ENCODE measurements at regions of chr21 and their contacts with region 1.

Region 1: GRCh38 chr21:45820171-45821091 is 161.1 kb upstream of the COL6A1 start:
- DNase-seq: peak; percentile 59 to 81 (median 76)
- ATAC-seq: peak; percentile 80
- H3K4me3 ChIP-seq: no peak overlapping the region
- H3K4me3 Mint-ChIP-seq: peak overlapping the region in 1 of 10 donors; percentile 1
- H3K27ac ChIP-seq: no peak overlapping the region
- H3K27ac Mint-ChIP-seq: peak overlapping the region in 7 of 9 donors; percentile 26 to 89 (median 58)
- H3K4me1 ChIP-seq: peaks cover 0 to 9% of the 10 kb centered on the region in 2 donors
- H3K4me1 Mint-ChIP-seq: peaks cover 0 to 36% (median 17%) of the 10 kb centered on the region in 7 donors
- H3K27me3 ChIP-seq: no peaks in the 10 kb centered on the region
- H3K27me3 Mint-ChIP-seq: no peaks in the 10 kb centered on the region

Region 2: DNA sequence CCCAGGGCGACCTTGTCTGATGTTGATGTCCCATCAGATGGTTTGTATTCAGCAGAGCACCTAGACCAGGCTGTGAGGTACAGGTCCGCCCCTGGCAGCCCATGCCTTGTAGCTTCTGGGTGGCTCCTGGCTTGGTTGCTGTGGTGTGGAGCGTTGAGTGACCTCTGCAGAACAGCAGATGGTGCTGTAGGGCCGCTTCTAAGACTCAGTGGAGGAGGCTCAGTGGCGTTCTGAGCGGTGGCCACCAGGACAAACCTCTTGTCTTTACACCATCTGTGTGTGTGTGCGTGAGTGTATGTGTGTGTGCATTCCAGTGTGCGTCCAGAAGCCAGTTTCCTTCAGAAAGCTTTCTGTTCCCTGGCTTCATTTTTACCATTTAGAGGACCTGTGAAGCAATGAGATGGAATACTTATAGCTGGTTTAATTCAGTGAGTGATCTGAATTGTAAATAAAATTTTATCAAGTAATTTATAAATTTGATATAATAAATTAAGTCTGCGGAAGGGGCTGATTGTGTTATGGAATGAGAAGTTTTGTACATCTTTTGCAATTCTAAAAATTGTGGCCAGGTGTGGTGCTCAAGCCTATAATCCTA is 680.0 kb before region 1 on chr21:
- CTCF ChIA-PET with region 1: interaction called, 3 read pairs
- POLR2A ChIA-PET with region 1: no interaction called
- intact Hi-C with region 1: loop called (anchors 1 kb)
- DNase-seq: peak; percentile 32 to 62 (median 51)
- ATAC-seq: peak; percentile 95
- H3K4me3 ChIP-seq: no peak overlapping the region
- H3K4me3 Mint-ChIP-seq: no peak overlapping the region
- H3K27ac ChIP-seq: no peak overlapping the region
- H3K27ac Mint-ChIP-seq: no peak overlapping the region
- H3K4me1 ChIP-seq: no peaks in the 10 kb centered on the region
- H3K4me1 Mint-ChIP-seq: peaks cover 4 to 24% (median 17%) of the 10 kb centered on the region in 7 donors
- H3K27me3 ChIP-seq: no peaks in the 10 kb centered on the region
- H3K27me3 Mint-ChIP-seq: no peaks in the 10 kb centered on the region

Region 3: DNA sequence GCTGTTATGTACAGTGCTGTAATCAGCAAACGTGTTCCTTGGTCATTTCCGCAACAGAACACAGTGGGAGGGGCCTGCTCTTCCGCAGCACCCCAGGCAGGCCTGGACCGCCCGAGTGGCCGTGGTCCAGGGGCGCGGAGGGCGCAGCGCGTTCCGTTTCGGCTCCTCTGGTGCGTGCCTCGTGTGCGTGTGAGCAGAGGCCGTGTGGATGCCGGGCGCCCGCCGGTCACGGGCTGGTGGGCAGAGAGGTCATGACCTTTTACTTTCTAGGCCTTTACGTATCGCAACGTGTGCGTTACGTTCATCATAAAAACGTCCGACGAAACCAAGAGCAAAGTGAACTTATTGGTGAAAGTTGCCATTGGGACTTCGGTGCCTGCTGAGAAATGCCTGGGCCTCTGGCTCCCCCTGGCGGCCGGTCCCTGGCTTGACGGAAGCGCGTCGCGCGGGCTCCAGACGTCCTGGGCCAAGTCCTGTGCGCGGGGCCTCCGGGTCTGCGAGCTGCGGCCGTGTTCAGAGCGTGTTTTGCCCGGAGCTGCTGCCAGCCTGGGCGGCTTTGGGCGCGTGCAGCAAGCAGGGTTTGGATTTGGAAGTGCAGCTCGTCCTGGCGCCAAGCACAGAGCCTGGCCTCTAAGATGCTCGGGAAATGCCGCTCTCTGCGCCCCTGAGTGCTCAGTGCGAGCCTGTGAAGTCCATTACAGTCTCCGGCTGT is 381.1 kb before region 1 on chr21:
- CTCF ChIA-PET with region 1: no interaction called
- POLR2A ChIA-PET with region 1: no interaction called
- intact Hi-C with region 1: loop called (anchors 1 to 10 kb)
- DNase-seq: peak; percentile 72 to 91 (median 85)
- ATAC-seq: peak; percentile 90
- H3K4me3 ChIP-seq: peak overlapping the region; percentile 46
- H3K4me3 Mint-ChIP-seq: peak overlapping the region; percentile 66 to 82 (median 73)
- H3K27ac ChIP-seq: peak overlapping the region; percentile 66
- H3K27ac Mint-ChIP-seq: peak overlapping the region in 7 of 9 donors; percentile 25 to 92 (median 66)
- H3K4me1 ChIP-seq: peaks cover 4% of the 10 kb centered on the region in 2 donors
- H3K4me1 Mint-ChIP-seq: peaks cover 2 to 16% (median 6%) of the 10 kb centered on the region in 7 donors
- H3K27me3 ChIP-seq: no peaks in the 10 kb centered on the region
- H3K27me3 Mint-ChIP-seq: peaks cover 0 to 5% (median 0%) of the 10 kb centered on the region in 5 donors

Region 4: GRCh38 chr21:45554477-45555175 is 265.8 kb before region 1 on chr21:
- CTCF ChIA-PET with region 1: interaction called, 4 read pairs
- POLR2A ChIA-PET with region 1: no interaction called
- intact Hi-C with region 1: loop called (anchors 1 kb)
- DNase-seq: peak; percentile 74 to 99 (median 91)
- ATAC-seq: peak; percentile 93
- H3K4me3 ChIP-seq: peak overlapping the region; percentile 89
- H3K4me3 Mint-ChIP-seq: peak overlapping the region; percentile 92 to 99 (median 96)
- H3K27ac ChIP-seq: peak overlapping the region; percentile 67
- H3K27ac Mint-ChIP-seq: peak overlapping the region; percentile 87 to 99 (median 96)
- H3K4me1 ChIP-seq: peaks cover 24 to 26% of the 10 kb centered on the region in 2 donors
- H3K4me1 Mint-ChIP-seq: peaks cover 22 to 39% (median 28%) of the 10 kb centered on the region in 7 donors
- H3K27me3 ChIP-seq: no peaks in the 10 kb centered on the region
- H3K27me3 Mint-ChIP-seq: no peaks in the 10 kb centered on the region

Region 5: GRCh38 chr21:45596704-45597318 is 223.6 kb before region 1 on chr21:
- CTCF ChIA-PET with region 1: interaction called, 3 read pairs
- POLR2A ChIA-PET with region 1: no interaction called
- intact Hi-C with region 1: loop called (anchors 1 kb)
- DNase-seq: peak; percentile 65 to 85 (median 79)
- ATAC-seq: peak; percentile 82
- H3K4me3 ChIP-seq: no peak overlapping the region
- H3K4me3 Mint-ChIP-seq: peak overlapping the region in 1 of 10 donors; percentile 6
- H3K27ac ChIP-seq: no peak overlapping the region
- H3K27ac Mint-ChIP-seq: peak overlapping the region in 7 of 9 donors; percentile 7 to 88 (median 82)
- H3K4me1 ChIP-seq: peaks cover 10 to 20% of the 10 kb centered on the region in 2 donors
- H3K4me1 Mint-ChIP-seq: peaks cover 9 to 29% (median 13%) of the 10 kb centered on the region in 7 donors
- H3K27me3 ChIP-seq: no peaks in the 10 kb centered on the region
- H3K27me3 Mint-ChIP-seq: no peaks in the 10 kb centered on the region